ENCODE measurements at regions of chr15 and their contacts with region 1.

Region 1: GRCh38 chr15:90387537-90388461 is at the start of gene IQGAP1:
- DNase-seq: peak; percentile 88
- ATAC-seq: peak; percentile 85
- H3K4me3 Mint-ChIP-seq: peak within 1 kb of the TSS; percentile 93
- H3K27ac Mint-ChIP-seq: peak within 1 kb of the TSS; percentile 95
- H3K4me1 Mint-ChIP-seq: peaks cover 47% of the 10 kb centered on the region
- H3K27me3 Mint-ChIP-seq: no peaks in the 10 kb centered on the region
- CTCF ChIP-seq: no peak
- total RNA-seq, gene IQGAP1: 187 and 227 TPM in 2 replicates

Region 2: GRCh38 chr15:90265271-90266060 is 122.3 kb before region 1 on chr15 and contains the start of gene NGRN:
- CTCF ChIA-PET with region 1: no interaction called
- POLR2A ChIA-PET with region 1: interaction called, 13 read pairs
- intact Hi-C with region 1: no loop called
- DNase-seq: peak; percentile 93
- ATAC-seq: peak; percentile 85
- H3K4me3 Mint-ChIP-seq: peak within 1 kb of the TSS; percentile 93
- H3K27ac Mint-ChIP-seq: peak within 1 kb of the TSS; percentile 91
- H3K4me1 Mint-ChIP-seq: peaks cover 51% of the 10 kb centered on the region
- H3K27me3 Mint-ChIP-seq: no peaks in the 10 kb centered on the region
- CTCF ChIP-seq: no peak
- total RNA-seq, gene NGRN: 32.8 and 34.1 TPM in 2 replicates

Region 3: GRCh38 chr15:90362936-90363212 is 24.9 kb before region 1 on chr15:
- CTCF ChIA-PET with region 1: interaction called, 8 read pairs
- POLR2A ChIA-PET with region 1: interaction called, 9 read pairs
- intact Hi-C with region 1: loop called (anchors 1 kb)
- DNase-seq: no peak
- ATAC-seq: no peak
- H3K4me3 Mint-ChIP-seq: no peak overlapping the region
- H3K27ac Mint-ChIP-seq: no peak overlapping the region
- H3K4me1 Mint-ChIP-seq: peaks cover 8% of the 10 kb centered on the region
- H3K27me3 Mint-ChIP-seq: no peaks in the 10 kb centered on the region
- CTCF ChIP-seq: no peak

Region 4: GRCh38 chr15:90400406-90401314 is 12.9 kb after region 1 on chr15:
- CTCF ChIA-PET with region 1: interaction called, 3 read pairs
- POLR2A ChIA-PET with region 1: interaction called, 36 read pairs
- intact Hi-C with region 1: loop called (anchors 1 kb)
- DNase-seq: no peak
- ATAC-seq: peak; percentile 93
- H3K4me3 Mint-ChIP-seq: peak overlapping the region; percentile 73
- H3K27ac Mint-ChIP-seq: peak overlapping the region; percentile 96
- H3K4me1 Mint-ChIP-seq: peaks cover 63% of the 10 kb centered on the region
- H3K27me3 Mint-ChIP-seq: no peaks in the 10 kb centered on the region
- CTCF ChIP-seq: no peak

Region 5: DNA sequence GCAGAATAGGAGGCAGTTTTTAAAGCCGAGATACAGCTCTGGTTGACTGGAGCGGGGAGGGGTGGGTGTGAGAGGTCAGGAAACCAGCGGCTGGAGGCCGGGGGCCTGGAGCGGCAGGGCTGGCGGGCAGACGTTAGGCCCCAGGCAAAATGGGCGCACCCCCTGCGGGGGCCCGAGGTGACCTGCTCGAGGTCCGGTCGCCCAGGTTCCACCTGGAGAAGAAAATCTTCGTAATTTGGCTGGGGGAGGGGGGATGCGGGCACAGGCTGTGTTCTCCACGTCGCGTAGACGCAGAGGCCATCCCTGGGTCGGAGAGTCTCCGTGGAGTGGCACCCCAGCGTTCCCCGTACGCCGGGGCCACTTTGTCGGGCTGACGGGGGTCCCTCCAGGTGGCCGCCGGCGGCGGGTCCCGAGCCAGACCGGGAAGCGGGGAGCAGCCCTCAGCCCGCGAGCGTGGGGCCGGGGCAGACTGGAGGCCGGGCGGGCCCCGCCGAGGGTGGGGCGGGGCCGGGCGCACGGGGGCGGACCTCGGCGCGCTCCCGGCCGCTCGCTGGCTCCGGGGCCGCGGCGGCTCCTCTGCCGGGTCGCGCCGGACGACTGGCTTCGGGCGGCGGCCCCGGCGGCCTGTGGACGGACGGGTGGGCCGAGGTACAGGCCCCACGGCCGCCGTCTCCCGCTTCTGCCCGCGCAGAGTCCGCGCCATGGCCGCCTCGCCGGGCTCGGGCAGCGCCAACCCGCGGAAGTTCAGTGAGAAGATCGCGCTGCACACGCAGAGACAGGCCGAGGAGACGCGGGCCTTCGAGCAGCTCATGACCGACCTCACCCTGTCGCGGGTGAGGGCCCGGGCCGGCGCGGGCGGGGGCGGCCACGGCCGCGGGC is 141.8 kb after region 1 on chr15 and contains the start of gene CRTC3:
- CTCF ChIA-PET with region 1: no interaction called
- POLR2A ChIA-PET with region 1: interaction called, 10 read pairs
- intact Hi-C with region 1: no loop called
- DNase-seq: peak; percentile 75
- ATAC-seq: peak; percentile 85
- H3K4me3 Mint-ChIP-seq: peak within 1 kb of the TSS; percentile 95
- H3K27ac Mint-ChIP-seq: peak within 1 kb of the TSS; percentile 88
- H3K4me1 Mint-ChIP-seq: peaks cover 45% of the 10 kb centered on the region
- H3K27me3 Mint-ChIP-seq: no peaks in the 10 kb centered on the region
- CTCF ChIP-seq: no peak
- total RNA-seq, gene CRTC3: 54.7 and 65.0 TPM in 2 replicates

Measured in activated B cell treated with CpG ODN at 0.5 μM for 24 hours (primary cell).